K562 (cell line): ENCODE measurements at regions of chr16 and their contacts with region 1.

Region 1: GRCh38 chr16:50266337-50267091 is at the start of gene ADCY7:
- DNase-seq: peak; percentile 71 to 91 (median 78)
- ATAC-seq: peak; percentile 83
- H3K4me3 ChIP-seq: peak within 1 kb of the TSS; percentile 54
- H3K27ac ChIP-seq: peak within 1 kb of the TSS; percentile 91
- H3K4me1 ChIP-seq: peaks cover 65 to 87% of the 10 kb centered on the region in 2 experiments
- H3K27me3 ChIP-seq: no peaks in the 10 kb centered on the region
- CTCF ChIP-seq: no peak
- EP300 ChIP-seq: peak; percentile 15; the same call in 1 of the 2 replicates
- POLR2A ChIP-seq: peak; percentile 87
- RAD21 ChIP-seq: peak in 1 of 2 experiments; percentile 18; a peak in 2 of 4 replicates
- polyA plus RNA-seq, gene ADCY7: 2.3 to 2.4 TPM

Region 2: DNA sequence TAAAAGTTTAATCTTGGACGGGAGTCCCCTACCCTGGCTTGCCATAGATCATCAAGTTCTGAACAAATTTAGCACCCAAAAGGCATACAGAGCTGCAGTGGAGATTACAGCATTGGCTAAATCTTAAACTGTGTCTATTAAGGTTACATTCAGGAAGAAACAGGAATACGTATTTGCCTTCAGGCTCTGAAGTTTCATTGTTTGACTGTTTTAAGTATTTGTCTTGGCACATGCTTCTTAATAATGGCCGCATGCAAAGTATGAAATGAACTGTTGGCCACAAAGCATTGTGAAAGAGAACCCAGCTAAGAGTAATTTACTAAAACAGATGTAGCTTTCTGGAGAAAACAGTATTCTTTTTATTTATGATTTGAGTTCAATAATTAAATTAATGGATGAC is 305.4 kb before region 1 on chr16:
- CTCF ChIA-PET with region 1: no interaction called
- POLR2A ChIA-PET with region 1: no interaction called
- in situ Hi-C with region 1: no loop called
- intact Hi-C with region 1: no loop called
- DNase-seq: no peak
- ATAC-seq: no peak
- H3K4me3 ChIP-seq: no peak overlapping the region
- H3K27ac ChIP-seq: no peak overlapping the region
- H3K4me1 ChIP-seq: no peaks in the 10 kb centered on the region
- H3K27me3 ChIP-seq: peaks cover 12 to 54% of the 10 kb centered on the region in 2 experiments
- CTCF ChIP-seq: no peak
- EP300 ChIP-seq: no peak
- POLR2A ChIP-seq: no peak
- RAD21 ChIP-seq: no peak

Region 3: DNA sequence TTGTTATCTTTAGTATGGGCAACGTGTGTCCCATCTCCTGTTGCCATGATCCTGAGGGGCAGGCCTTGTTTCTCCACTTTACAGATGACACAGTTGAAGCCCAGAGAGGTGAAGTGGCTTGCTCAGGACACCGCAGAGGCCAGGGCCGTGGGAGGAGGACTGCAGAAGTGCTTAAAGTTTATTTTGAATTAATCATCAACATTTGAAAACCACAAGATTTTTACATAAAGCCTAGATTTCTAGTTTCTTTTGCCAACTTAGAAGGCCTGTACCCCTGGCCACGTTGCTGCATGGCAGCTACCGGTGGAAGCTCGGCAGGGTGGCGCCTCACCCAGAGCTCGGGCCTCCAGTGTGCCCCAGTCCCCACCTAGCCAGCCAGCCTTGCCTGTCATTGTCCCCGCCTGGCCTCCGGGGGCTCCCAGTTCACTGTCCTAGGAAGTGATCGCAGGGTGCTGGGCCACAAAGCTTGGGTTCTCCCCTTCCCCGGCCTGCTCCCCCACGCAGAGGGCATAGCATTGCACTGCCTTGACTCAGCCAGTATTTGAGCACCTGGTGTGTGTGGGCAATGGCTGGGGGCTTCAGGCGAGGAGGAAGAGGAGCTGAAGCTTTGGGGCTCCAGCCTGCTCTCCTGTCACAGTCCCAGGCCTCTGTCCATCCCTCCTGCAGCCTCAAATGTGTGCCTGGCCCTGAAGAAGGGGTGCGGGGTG is 15.0 kb before region 1 on chr16:
- CTCF ChIA-PET with region 1: no interaction called
- POLR2A ChIA-PET with region 1: interaction called, 22 read pairs
- in situ Hi-C with region 1: no loop called
- intact Hi-C with region 1: no loop called
- DNase-seq: no peak
- ATAC-seq: peak; percentile 22
- H3K4me3 ChIP-seq: no peak overlapping the region
- H3K27ac ChIP-seq: no peak overlapping the region
- H3K4me1 ChIP-seq: peaks cover 51 to 55% of the 10 kb centered on the region in 2 experiments
- H3K27me3 ChIP-seq: no peaks in the 10 kb centered on the region
- CTCF ChIP-seq: 0 out of 6 replicates have a peak, but pooled peaks of 1 of the 3 experiments have one; percentile 13
- EP300 ChIP-seq: no peak
- POLR2A ChIP-seq: no peak
- RAD21 ChIP-seq: no peak

Region 4: DNA sequence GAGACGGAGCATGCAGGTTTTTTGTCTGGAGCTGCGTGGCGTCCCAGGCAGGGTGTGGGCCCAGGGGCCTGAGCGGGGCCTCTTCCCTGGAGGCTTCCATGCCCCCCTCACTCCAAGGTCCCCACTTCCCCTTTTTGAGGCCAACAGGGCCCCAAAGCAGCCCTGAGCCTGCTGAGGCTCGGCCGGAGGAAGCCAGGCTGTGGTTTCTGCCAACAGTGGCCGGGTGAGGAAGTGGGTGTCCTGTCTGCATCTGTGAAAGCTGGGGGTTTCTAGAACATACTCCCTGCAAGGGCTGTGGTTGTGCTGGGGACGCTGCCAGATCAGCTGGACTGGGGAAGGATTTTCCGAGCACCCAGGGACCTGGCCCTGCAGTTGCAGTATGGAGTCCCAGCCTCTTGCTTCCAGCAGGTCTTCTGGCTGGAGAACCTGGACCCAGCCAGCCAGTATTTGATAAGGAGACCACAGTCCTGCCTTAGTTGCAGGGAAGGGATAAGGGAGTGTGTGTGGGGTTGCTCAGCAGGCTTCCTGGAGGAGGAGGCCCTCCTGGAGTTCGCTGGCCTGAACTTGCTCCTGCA is 15.5 kb after region 1 on chr16:
- CTCF ChIA-PET with region 1: no interaction called
- POLR2A ChIA-PET with region 1: interaction called, 13 read pairs
- in situ Hi-C with region 1: no loop called
- intact Hi-C with region 1: no loop called
- DNase-seq: peak in 2 of 4 experiments; percentile 38 to 52
- ATAC-seq: peak; percentile 58
- H3K4me3 ChIP-seq: no peak overlapping the region
- H3K27ac ChIP-seq: peak overlapping the region; percentile 60; the same call in 1 of the 3 replicates
- H3K4me1 ChIP-seq: peaks cover 43 to 47% of the 10 kb centered on the region in 2 experiments
- H3K27me3 ChIP-seq: no peaks in the 10 kb centered on the region
- CTCF ChIP-seq: no peak; a peak in 1 of 6 replicates
- EP300 ChIP-seq: no peak
- POLR2A ChIP-seq: no peak
- RAD21 ChIP-seq: peak in 1 of 2 experiments; percentile 38; a peak in 1 of 4 replicates

Region 5: GRCh38 chr16:50351116-50351515 is 84.6 kb after region 1 on chr16:
- CTCF ChIA-PET with region 1: no interaction called
- POLR2A ChIA-PET with region 1: no interaction called
- in situ Hi-C with region 1: no loop called
- intact Hi-C with region 1: no loop called
- DNase-seq: no peak
- ATAC-seq: no peak
- H3K4me3 ChIP-seq: no peak overlapping the region
- H3K27ac ChIP-seq: no peak overlapping the region
- H3K4me1 ChIP-seq: no peaks in the 10 kb centered on the region
- H3K27me3 ChIP-seq: no peaks in the 10 kb centered on the region
- CTCF ChIP-seq: no peak
- EP300 ChIP-seq: no peak
- POLR2A ChIP-seq: no peak
- RAD21 ChIP-seq: no peak